HepG2 (cell line): ENCODE measurements at regions of chrX and their contacts with region 1.

Region 1: DNA sequence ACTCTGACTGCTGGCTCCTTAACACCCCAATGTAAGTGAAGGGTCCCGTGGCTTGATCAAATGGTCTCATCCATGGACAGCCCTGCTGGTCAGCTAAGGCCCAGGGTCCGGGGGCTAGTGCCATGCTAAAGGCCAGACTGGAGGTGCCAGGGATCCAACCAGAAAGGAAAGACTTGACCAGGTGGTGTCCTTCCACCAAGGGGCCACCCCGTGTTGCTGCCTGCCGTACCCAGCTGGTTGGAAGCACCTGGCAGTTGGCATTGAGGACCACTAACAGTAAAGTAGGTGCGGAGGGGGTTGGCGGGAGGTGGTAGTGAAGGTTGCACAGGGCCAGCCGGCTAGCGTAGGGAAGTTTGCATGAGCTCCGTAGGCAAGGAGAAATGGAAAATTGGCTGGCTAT is 1.7 kb upstream of the IL1RAPL2 start:
- DNase-seq: no peak
- ATAC-seq: no peak
- H3K4me3 ChIP-seq: no peak overlapping the region
- H3K27ac ChIP-seq: no peak overlapping the region
- H3K4me1 ChIP-seq: no peaks in the 10 kb centered on the region
- H3K27me3 ChIP-seq: no peaks in the 10 kb centered on the region
- CTCF ChIP-seq: no peak
- EP300 ChIP-seq: no peak
- POLR2A ChIP-seq: no peak
- RAD21 ChIP-seq: no peak

Region 2: GRCh38 chrX:105190252-105190853 is 626.0 kb after region 1 on chrX:
- CTCF ChIA-PET with region 1: no interaction called
- POLR2A ChIA-PET with region 1: no interaction called
- in situ Hi-C with region 1: no loop called
- intact Hi-C with region 1: loop called (anchors 5 kb)
- DNase-seq: no peak
- ATAC-seq: no peak
- H3K4me3 ChIP-seq: no peak overlapping the region
- H3K27ac ChIP-seq: no peak overlapping the region
- H3K4me1 ChIP-seq: no peaks in the 10 kb centered on the region
- H3K27me3 ChIP-seq: no peaks in the 10 kb centered on the region
- CTCF ChIP-seq: peak; percentile 46
- EP300 ChIP-seq: no peak
- POLR2A ChIP-seq: no peak
- RAD21 ChIP-seq: no peak